Activated CD4-positive, alpha-beta memory T cell treated with anti-CD3 and anti-CD28 coated beads for 36 hours (primary cell): ENCODE measurements at regions of chr2 and their contacts with region 1.

Region 1: DNA sequence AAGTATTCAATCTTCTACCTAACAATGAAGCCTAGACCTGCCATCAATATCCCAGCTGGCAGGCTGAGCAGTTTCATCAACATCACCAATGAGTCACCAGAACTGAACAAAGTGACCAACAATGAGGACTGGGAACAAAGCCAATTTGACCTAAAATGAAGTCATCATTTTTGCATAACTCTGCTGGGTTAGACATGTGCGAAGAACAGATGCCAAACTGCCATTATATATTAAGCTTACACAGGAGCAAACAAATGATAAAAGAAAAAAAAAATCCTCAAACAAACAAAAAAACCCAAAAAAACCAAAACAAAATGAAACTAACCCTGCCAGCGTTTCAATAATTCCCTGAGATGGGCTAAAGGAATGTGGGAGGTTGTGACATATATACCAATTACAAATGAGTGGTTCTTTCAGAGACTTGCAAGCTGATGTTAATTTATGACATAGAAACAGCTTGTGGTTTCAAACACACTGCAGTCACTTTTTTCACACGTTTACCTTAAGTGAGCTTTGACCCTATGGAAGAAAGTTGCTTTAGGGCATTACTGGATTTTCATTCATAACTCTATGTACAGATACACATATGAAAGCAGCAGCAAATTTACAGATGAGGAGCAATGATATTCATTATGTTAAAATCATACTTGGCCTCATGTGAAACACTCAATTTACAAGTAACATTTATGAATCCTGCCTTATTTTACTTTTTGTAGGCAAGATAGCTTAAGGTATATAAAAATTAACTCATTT is 56.9 kb upstream of the CCDC141 start:
- DNase-seq: no peak
- H3K4me3 Mint-ChIP-seq: no peak overlapping the region
- H3K27ac Mint-ChIP-seq: peak overlapping the region; percentile 18
- H3K4me1 Mint-ChIP-seq: peaks cover 22% of the 10 kb centered on the region
- H3K27me3 Mint-ChIP-seq: no peaks in the 10 kb centered on the region

Region 2: DNA sequence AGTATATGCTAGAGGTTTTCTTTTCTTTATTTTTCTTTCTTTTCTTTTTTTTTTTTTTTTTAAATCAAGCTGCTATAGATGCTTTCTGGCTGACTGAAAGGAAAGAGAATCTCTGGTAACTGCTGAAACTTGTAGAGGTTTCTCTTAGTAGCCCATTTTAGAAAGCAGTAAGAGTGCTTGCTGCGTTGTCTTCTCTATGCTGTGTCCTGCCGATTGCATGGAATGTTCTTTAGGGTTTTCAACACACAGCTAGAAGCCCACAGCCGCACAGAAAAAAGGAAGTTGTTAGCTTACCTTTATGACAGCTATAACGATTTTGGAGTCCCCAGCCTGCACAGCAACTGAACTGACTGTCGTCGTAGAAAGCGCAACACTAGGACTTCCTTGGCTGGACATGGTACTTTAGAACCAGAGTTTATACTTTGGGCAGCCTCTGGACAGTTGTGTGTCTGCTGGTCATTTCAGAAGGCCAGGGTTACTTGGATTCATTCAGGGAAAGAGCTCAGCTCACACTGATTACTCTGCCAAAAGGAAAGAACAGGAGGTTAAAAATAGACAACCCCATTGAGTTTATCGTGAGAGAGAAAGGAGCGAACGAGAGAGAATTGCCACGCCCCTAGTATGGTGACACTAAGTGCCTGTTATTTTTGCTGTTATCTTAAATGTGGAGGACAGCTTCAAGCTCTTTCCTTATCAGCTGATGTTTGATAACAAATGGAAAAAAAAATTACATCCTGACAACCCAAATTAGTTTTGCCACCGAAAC is 57.1 kb before region 1 on chr2 and contains the start of gene CCDC141:
- CTCF ChIA-PET with region 1: no interaction called
- POLR2A ChIA-PET with region 1: no interaction called
- intact Hi-C with region 1: loop called (anchors 5 kb)
- DNase-seq: peak; percentile 17
- H3K4me3 Mint-ChIP-seq: peak within 1 kb of the TSS; percentile 72
- H3K27ac Mint-ChIP-seq: peak within 1 kb of the TSS; percentile 16
- H3K4me1 Mint-ChIP-seq: peaks cover 22% of the 10 kb centered on the region
- H3K27me3 Mint-ChIP-seq: peaks cover 1% of the 10 kb centered on the region
- total RNA-seq, gene CCDC141: 0.93 to 1.3 TPM

Region 3: GRCh38 chr2:179123272-179123662 is 16.4 kb after region 1 on chr2:
- CTCF ChIA-PET with region 1: no interaction called
- POLR2A ChIA-PET with region 1: no interaction called
- intact Hi-C with region 1: no loop called
- DNase-seq: no peak
- H3K4me3 Mint-ChIP-seq: no peak overlapping the region
- H3K27ac Mint-ChIP-seq: no peak overlapping the region
- H3K4me1 Mint-ChIP-seq: no peaks in the 10 kb centered on the region
- H3K27me3 Mint-ChIP-seq: no peaks in the 10 kb centered on the region

Region 4: DNA sequence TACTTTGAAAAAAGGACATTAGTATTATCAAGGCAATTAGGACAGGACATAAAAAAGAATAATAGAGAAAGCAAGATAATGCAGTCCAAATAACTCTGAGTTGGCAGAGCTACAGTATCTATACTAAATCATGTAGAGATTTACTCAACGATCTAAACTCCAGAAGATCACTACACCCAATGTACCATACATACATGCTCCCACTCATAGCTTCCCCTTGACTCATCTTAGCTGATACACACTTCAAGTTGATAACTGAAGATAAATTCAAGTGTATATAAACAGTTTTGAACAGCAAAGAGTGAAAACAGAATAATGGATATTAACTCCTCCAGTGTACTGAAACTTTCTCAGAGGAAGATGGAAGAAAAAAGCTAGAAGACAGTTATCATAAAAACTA is 79.3 kb after region 1 on chr2:
- CTCF ChIA-PET with region 1: no interaction called
- POLR2A ChIA-PET with region 1: no interaction called
- intact Hi-C with region 1: no loop called
- DNase-seq: no peak
- H3K4me3 Mint-ChIP-seq: no peak overlapping the region
- H3K27ac Mint-ChIP-seq: no peak overlapping the region
- H3K4me1 Mint-ChIP-seq: no peaks in the 10 kb centered on the region
- H3K27me3 Mint-ChIP-seq: no peaks in the 10 kb centered on the region

Region 5: DNA sequence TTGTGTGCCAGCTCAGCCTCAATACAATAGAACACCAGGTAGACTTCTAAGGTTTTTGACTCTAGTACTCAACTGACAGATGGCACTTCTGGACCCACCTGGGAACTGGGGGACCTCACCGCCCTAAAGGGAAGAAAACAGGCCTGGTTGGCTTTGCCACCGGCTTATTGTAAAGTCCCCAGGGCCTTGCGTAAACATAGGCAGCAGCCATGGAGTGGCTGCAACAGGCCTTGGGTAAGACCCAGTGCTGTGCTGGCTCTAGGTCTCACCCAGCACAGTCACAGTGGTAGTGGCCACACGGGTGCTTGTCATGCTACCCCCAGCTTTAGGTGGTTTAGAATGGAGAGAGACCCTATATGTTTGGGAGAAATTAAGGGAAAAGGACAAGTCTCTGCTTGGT is 388.5 kb after region 1 on chr2:
- CTCF ChIA-PET with region 1: no interaction called
- POLR2A ChIA-PET with region 1: no interaction called
- intact Hi-C with region 1: no loop called
- DNase-seq: no peak
- H3K4me3 Mint-ChIP-seq: no peak overlapping the region
- H3K27ac Mint-ChIP-seq: no peak overlapping the region
- H3K4me1 Mint-ChIP-seq: no peaks in the 10 kb centered on the region
- H3K27me3 Mint-ChIP-seq: no peaks in the 10 kb centered on the region